Mammary epithelial cell (primary cell): ENCODE measurements at regions of chr9 and their contacts with region 1.

Region 1: DNA sequence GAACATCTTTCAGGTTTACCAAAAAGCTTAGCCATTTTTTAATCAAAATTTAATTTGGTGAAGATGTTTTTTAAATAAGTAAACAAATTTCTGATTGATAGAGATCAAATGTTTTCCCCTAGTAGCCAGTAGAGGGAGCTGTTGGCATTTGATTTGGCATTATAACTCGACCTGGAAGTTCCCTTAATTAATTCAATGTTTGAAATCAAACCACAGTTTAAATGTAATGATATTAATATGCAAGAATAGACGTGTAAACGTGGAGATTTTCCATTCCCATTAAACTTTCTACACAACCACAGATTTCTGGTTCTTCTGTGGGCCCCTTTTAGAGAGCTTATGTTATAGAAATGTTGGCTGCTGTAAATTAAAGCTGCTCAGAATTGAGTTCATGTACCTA is 148.1 kb upstream of the MPDZ start:
- DNase-seq: peak; percentile 29
- H3K4me3 ChIP-seq: no peak overlapping the region
- H3K27ac ChIP-seq: no peak overlapping the region
- H3K4me1 ChIP-seq: no peaks in the 10 kb centered on the region
- H3K27me3 ChIP-seq: peaks cover 3% of the 10 kb centered on the region
- CTCF ChIP-seq: peak; percentile 62 to 66

Region 2: DNA sequence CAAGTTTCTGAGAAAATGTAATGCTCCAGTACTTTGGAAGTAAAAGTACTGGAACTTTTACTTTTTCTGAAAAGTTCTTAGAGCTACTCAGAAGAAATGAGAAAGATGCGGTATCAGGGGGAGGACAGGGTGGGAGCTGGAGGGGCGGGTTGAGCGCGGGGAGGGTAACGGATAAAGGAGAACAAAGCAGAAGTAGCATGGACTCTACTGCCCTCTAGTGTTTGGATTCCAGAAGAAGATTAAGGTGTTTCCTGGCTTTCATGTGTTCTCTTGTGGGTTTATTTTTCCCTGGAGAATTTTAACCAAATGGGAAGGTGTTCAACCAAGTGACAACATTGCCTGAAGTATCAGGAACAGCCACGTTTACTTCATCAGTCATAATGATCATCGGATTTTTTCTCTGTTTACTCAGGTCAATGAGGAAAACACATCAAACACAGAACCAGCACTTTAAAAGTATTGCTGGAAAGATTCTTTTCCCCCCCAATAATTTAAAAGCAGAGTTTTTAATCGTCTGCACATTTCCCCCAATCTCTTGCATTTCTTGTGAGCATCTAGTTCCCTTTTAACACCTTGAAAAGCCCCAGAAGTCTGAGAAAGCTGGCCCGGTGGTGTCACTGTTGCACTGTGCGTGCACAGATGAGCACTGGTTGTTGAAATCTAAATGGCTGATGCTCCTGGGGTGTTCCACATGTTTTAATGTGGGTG is 338.7 kb before region 1 on chr9:
- CTCF ChIA-PET with region 1: no interaction called
- dilution Hi-C with region 1: no loop called
- in situ Hi-C with region 1: no loop called
- intact Hi-C with region 1: loop called (anchors 2 kb)
- DNase-seq: peak; percentile 35
- H3K4me3 ChIP-seq: no peak overlapping the region
- H3K27ac ChIP-seq: no peak overlapping the region
- H3K4me1 ChIP-seq: peaks cover 5% of the 10 kb centered on the region
- H3K27me3 ChIP-seq: no peaks in the 10 kb centered on the region
- CTCF ChIP-seq: peak; percentile 53 to 65

Region 3: DNA sequence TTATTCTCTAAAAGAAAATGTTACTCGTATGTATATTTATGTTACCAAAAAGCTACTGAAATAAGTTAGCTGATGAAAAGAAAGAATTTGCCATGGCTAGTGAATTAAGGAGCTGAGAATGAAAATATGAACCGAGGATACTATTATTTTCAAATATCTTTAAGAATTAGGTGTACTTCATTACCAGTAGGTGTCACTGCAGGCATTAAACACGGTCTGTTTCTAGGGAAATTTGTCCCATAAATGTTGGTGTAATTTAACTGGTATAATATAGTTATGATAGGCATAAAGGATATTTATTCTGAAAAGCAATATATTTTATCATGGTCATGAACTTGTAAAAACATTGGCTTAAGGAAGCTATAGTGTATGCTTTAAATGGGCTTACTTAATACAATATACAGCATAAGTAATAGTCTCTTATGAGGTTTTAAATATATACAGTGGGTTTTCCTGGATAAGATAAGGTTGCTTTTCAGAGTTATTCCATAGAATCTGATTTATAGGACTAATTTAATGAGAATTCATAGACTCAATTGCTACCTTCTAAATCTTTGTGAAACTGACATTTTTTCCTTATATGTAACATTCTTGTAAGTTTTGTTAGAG is 75.7 kb before region 1 on chr9:
- CTCF ChIA-PET with region 1: interaction called, 4 read pairs
- dilution Hi-C with region 1: no loop called
- in situ Hi-C with region 1: no loop called
- intact Hi-C with region 1: loop called (anchors 5 kb)
- DNase-seq: peak; percentile 22
- H3K4me3 ChIP-seq: no peak overlapping the region
- H3K27ac ChIP-seq: no peak overlapping the region
- H3K4me1 ChIP-seq: no peaks in the 10 kb centered on the region
- H3K27me3 ChIP-seq: no peaks in the 10 kb centered on the region
- CTCF ChIP-seq: peak; percentile 56 to 66

Region 4: DNA sequence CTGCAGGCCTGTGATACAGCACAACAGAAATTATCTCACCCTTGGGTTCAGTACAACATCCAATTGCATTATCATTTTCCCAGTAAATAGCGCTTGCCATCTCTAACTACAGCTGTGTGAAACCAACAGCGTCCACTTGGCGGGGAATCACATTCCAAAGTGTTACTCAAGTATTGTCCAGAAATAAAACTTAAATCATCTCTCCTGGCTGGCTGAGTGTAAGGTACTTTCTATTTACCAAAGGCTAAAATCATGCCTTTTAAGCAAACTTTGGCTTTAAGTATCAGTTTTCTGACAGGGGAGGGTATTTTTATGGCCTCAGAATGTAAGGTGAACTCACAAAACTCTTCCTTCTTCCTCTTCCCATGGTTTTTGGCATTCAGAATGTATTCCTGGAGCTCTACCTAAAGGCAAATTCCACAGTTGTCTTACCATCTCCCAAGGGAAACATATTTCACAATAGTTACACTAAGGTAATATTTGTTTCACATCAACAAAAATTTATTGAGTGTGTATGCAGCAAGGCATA is 57.5 kb after region 1 on chr9:
- CTCF ChIA-PET with region 1: no interaction called
- dilution Hi-C with region 1: no loop called
- in situ Hi-C with region 1: no loop called
- intact Hi-C with region 1: no loop called
- DNase-seq: peak; percentile 61
- H3K4me3 ChIP-seq: peak overlapping the region in 1 of 3 experiments; percentile 13
- H3K27ac ChIP-seq: no peak overlapping the region
- H3K4me1 ChIP-seq: peaks cover 27% of the 10 kb centered on the region
- H3K27me3 ChIP-seq: no peaks in the 10 kb centered on the region
- CTCF ChIP-seq: peak; percentile 31 to 45

Region 5: GRCh38 chr9:13974891-13975290 is 547.3 kb after region 1 on chr9:
- CTCF ChIA-PET with region 1: no interaction called
- dilution Hi-C with region 1: no loop called
- in situ Hi-C with region 1: no loop called
- intact Hi-C with region 1: no loop called
- DNase-seq: no peak
- H3K4me3 ChIP-seq: no peak overlapping the region
- H3K27ac ChIP-seq: no peak overlapping the region
- H3K4me1 ChIP-seq: no peaks in the 10 kb centered on the region
- H3K27me3 ChIP-seq: no peaks in the 10 kb centered on the region
- CTCF ChIP-seq: no peak

Region 6: DNA sequence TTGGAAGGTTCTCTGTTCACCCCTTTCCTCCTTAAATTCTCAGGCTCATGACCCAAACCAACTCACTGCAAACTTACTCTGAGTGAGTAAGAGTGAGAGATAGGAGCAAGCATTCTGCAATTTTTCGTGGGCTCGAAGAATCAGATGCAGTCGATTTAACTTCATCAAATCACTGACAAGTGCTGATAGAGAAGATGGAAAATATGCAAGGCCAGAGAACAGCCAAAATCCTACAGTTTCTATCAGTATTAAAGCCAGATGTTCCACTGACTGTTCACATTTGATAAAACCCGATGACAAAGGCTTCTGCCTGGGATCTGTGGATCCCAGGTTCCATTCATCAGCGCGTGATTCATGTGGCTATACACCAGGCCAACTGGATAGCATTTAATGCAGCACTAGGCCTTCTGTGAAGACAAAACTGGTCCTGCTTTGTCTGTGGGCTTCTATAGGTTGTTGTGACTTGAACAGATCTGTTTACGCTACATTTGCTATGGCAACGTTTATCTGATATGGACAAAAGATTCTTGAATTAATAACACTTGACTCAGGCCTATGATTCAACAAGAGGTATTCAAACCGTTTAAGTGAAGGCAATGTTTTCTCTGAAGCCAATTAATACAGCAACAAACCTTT is 635.1 kb after region 1 on chr9:
- CTCF ChIA-PET with region 1: no interaction called
- dilution Hi-C with region 1: no loop called
- in situ Hi-C with region 1: no loop called
- intact Hi-C with region 1: no loop called
- DNase-seq: peak; percentile 74
- H3K4me3 ChIP-seq: no peak overlapping the region
- H3K27ac ChIP-seq: no peak overlapping the region
- H3K4me1 ChIP-seq: no peaks in the 10 kb centered on the region
- H3K27me3 ChIP-seq: no peaks in the 10 kb centered on the region
- CTCF ChIP-seq: no peak

Region 7: GRCh38 chr9:14096258-14096922 is 668.8 kb after region 1 on chr9:
- CTCF ChIA-PET with region 1: no interaction called
- dilution Hi-C with region 1: no loop called
- in situ Hi-C with region 1: loop called in 1 of 2 experiments (anchors 25 kb)
- intact Hi-C with region 1: no loop called
- DNase-seq: peak; percentile 74
- H3K4me3 ChIP-seq: peak overlapping the region in 1 of 3 experiments; percentile 29
- H3K27ac ChIP-seq: peak overlapping the region; percentile 86
- H3K4me1 ChIP-seq: peaks cover 20% of the 10 kb centered on the region
- H3K27me3 ChIP-seq: no peaks in the 10 kb centered on the region
- CTCF ChIP-seq: no peak

Region 8: GRCh38 chr9:14400658-14400995 is 973.0 kb after region 1 on chr9:
- CTCF ChIA-PET with region 1: no interaction called
- dilution Hi-C with region 1: no loop called
- in situ Hi-C with region 1: no loop called
- intact Hi-C with region 1: loop called (anchors 1 kb)
- DNase-seq: peak; percentile 77
- H3K4me3 ChIP-seq: peak overlapping the region in 1 of 3 experiments; percentile 31
- H3K27ac ChIP-seq: no peak overlapping the region
- H3K4me1 ChIP-seq: peaks cover 6% of the 10 kb centered on the region
- H3K27me3 ChIP-seq: peaks cover 5% of the 10 kb centered on the region
- CTCF ChIP-seq: peak; percentile 60 to 66

Region 9: GRCh38 chr9:14652729-14653377 is 1225.3 kb after region 1 on chr9:
- CTCF ChIA-PET with region 1: no interaction called
- dilution Hi-C with region 1: no loop called
- in situ Hi-C with region 1: no loop called
- intact Hi-C with region 1: loop called (anchors 10 kb)
- DNase-seq: peak; percentile 3
- H3K4me3 ChIP-seq: no peak overlapping the region
- H3K27ac ChIP-seq: no peak overlapping the region
- H3K4me1 ChIP-seq: no peaks in the 10 kb centered on the region
- H3K27me3 ChIP-seq: no peaks in the 10 kb centered on the region
- CTCF ChIP-seq: peak; percentile 25 to 59